ENCODE measurements at regions of chr4 and their contacts with region 1.

Region 1: GRCh38 chr4:85147439-85148076 is 181.1 kb upstream of the WDFY3 start:
- DNase-seq: peak; percentile 31
- H3K4me3 ChIP-seq: no peak overlapping the region
- H3K27ac ChIP-seq: no peak overlapping the region
- H3K4me1 ChIP-seq: no peaks in the 10 kb centered on the region
- H3K27me3 ChIP-seq: no peaks in the 10 kb centered on the region
- CTCF ChIP-seq: peak in 3 of 4 experiments; percentile 52 to 64 (median 52)
- POLR2A ChIP-seq: no peak

Region 2: GRCh38 chr4:85243857-85244256 is 96.3 kb after region 1 on chr4:
- intact Hi-C with region 1: no loop called
- DNase-seq: no peak
- H3K4me3 ChIP-seq: no peak overlapping the region
- H3K27ac ChIP-seq: no peak overlapping the region
- H3K4me1 ChIP-seq: no peaks in the 10 kb centered on the region
- H3K27me3 ChIP-seq: no peaks in the 10 kb centered on the region
- CTCF ChIP-seq: no peak
- POLR2A ChIP-seq: no peak

Region 3: GRCh38 chr4:85747882-85748491 is 600.4 kb after region 1 on chr4:
- intact Hi-C with region 1: loop called (anchors 2 kb)
- DNase-seq: peak; percentile 58
- H3K4me3 ChIP-seq: no peak overlapping the region
- H3K27ac ChIP-seq: no peak overlapping the region
- H3K4me1 ChIP-seq: no peaks in the 10 kb centered on the region
- H3K27me3 ChIP-seq: no peaks in the 10 kb centered on the region
- CTCF ChIP-seq: peak; percentile 53 to 84 (median 78)
- POLR2A ChIP-seq: no peak

Region 4: GRCh38 chr4:85979276-85979675 is 831.7 kb after region 1 on chr4:
- intact Hi-C with region 1: loop called (anchors 10 kb)
- DNase-seq: no peak
- H3K4me3 ChIP-seq: no peak overlapping the region
- H3K27ac ChIP-seq: no peak overlapping the region
- H3K4me1 ChIP-seq: no peaks in the 10 kb centered on the region
- H3K27me3 ChIP-seq: no peaks in the 10 kb centered on the region
- CTCF ChIP-seq: no peak
- POLR2A ChIP-seq: no peak

Measured in prostate gland (tissue), 2 donors.